K562 (cell line): ENCODE measurements at regions of chr1 and their contacts with region 1.

Region 1: DNA sequence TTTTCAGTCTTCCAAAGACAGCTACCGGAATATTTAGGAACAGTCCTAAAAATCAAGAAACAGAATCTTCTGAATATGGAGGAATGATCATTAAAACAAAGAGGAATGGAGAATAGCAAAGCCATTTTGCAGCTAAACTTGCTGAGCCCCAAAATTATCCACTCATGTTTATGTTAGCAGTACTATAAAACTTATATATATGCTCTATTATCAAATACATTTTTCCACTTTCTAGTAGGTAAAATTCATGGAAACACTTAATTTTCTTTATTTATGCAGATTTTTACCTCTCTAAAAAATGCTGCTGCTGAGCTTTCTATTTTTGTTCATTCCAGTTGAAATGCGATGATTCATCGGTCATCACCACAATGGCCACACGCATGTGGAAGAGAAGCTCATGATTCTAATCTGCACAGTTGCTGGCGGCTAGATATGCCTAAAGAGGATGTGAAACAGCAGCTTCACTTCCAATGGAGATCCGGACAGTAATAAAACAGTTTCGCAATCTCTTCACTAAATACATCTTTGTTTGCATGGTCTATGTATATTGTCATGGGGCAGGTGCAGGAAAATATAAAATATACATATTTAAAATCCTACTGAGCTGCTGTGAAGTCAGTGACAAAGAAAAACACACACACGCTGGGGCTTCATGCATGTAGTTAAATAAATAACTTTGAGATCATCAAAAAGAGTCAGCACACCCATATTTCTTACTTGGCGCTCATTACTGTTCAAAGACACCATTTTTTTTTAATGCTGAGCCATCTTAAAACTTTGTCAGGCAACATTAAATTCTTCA is 292.2 kb downstream of the SMYD3 start:
- DNase-seq: peak; percentile 62 to 96 (median 74)
- ATAC-seq: peak; percentile 95
- H3K4me3 ChIP-seq: no peak overlapping the region
- H3K27ac ChIP-seq: peak overlapping the region; percentile 88
- H3K4me1 ChIP-seq: peaks cover 11 to 39% of the 10 kb centered on the region in 2 experiments
- H3K27me3 ChIP-seq: no peaks in the 10 kb centered on the region
- CTCF ChIP-seq: no peak
- EP300 ChIP-seq: peak; percentile 97
- POLR2A ChIP-seq: no peak
- RAD21 ChIP-seq: peak in 1 of 2 experiments; percentile 43; a peak in 3 of 4 replicates

Region 2: DNA sequence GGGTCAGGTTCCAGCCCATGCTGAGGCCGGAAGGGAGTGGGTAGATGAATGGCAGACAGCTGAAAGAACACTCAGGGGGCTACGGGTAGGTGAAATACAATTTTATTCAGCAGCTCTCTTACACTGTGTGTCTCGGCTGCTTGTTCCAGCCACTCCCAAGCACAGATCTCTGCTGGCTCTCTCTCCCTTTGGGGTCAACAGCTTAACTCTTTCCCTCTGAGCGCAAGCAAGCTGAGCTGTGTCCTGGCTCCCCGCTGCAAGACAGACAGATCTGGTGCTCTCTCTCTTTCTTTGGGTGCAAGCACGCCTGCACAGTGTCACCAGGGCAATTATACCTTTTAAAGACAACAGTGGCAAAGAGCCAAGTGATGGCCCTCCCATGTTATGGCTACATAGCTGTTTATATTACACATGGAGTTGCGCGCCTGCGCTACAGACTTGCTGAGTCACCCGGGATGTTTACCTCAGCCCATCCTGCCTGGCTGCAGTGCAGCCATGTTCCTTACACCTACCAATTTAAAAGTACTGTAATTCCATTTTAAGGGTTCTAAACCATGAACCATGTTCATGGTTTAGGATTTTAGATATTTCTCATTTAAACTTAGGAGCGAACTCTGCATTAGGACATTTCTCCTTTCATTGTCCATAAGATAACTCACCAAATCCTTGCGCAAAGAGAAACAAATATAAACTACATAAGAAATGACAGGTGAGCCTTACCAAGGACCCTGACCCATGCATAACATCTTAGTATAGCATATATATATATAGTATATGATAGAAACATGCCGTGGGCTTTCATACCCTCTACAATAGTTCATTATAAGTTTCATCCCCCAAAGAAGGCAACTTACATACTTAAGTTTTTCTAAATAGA is 104.3 kb before region 1 on chr1:
- CTCF ChIA-PET with region 1: no interaction called
- POLR2A ChIA-PET with region 1: no interaction called
- in situ Hi-C with region 1: no loop called
- intact Hi-C with region 1: loop called (anchors 5 kb)
- DNase-seq: peak; percentile 76 to 92 (median 78)
- ATAC-seq: peak; percentile 87
- H3K4me3 ChIP-seq: no peak overlapping the region
- H3K27ac ChIP-seq: peak overlapping the region; percentile 71
- H3K4me1 ChIP-seq: peaks cover 15 to 65% of the 10 kb centered on the region in 2 experiments
- H3K27me3 ChIP-seq: no peaks in the 10 kb centered on the region
- CTCF ChIP-seq: no peak
- EP300 ChIP-seq: peak; percentile 64; the same call in 1 of the 2 replicates
- POLR2A ChIP-seq: no peak
- RAD21 ChIP-seq: peak; percentile 20 to 36; a peak in 2 of 4 replicates

Region 3: DNA sequence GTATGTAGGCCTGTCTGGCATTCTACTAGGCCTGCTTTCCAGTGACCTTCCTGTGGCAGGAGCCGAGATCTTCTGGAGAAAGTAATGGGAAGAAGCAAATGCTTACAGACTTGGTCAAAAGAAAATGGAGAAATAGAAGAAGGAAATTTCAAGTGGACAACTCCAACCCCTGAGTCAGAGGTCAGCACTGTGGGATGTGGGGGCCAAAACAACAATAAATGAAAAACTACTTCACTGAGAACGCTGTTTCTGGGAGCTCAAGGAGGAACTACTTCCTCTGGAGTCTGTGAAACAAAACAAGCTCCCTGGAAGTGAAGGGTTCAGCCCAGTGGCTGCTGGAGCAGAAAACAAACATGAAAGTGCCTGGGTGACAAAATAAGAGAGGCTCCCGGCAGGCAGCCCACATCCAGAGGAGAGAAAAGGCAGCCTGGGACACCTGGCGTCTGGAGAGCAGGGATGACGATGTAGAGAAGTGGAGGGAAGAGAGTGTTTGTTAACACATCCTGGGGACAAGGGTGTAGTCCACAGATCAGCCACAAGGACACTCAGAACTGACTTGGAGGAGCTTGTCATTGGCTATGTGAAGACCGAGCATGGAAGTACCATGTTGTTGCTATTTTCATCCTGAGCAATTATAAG is 63.0 kb before region 1 on chr1:
- CTCF ChIA-PET with region 1: no interaction called
- POLR2A ChIA-PET with region 1: interaction called, 3 read pairs
- in situ Hi-C with region 1: no loop called
- intact Hi-C with region 1: loop called (anchors 5 kb)
- DNase-seq: peak; percentile 63 to 73 (median 70)
- ATAC-seq: peak; percentile 87
- H3K4me3 ChIP-seq: no peak overlapping the region
- H3K27ac ChIP-seq: peak overlapping the region; percentile 84
- H3K4me1 ChIP-seq: peaks cover 16 to 51% of the 10 kb centered on the region in 2 experiments
- H3K27me3 ChIP-seq: no peaks in the 10 kb centered on the region
- CTCF ChIP-seq: peak; percentile 37 to 47 (median 47); a peak in 5 of 6 replicates
- EP300 ChIP-seq: peak; percentile 4; the same call in 1 of the 2 replicates
- POLR2A ChIP-seq: no peak
- RAD21 ChIP-seq: peak in 1 of 2 experiments; percentile 46; a peak in 2 of 4 replicates

Region 4: DNA sequence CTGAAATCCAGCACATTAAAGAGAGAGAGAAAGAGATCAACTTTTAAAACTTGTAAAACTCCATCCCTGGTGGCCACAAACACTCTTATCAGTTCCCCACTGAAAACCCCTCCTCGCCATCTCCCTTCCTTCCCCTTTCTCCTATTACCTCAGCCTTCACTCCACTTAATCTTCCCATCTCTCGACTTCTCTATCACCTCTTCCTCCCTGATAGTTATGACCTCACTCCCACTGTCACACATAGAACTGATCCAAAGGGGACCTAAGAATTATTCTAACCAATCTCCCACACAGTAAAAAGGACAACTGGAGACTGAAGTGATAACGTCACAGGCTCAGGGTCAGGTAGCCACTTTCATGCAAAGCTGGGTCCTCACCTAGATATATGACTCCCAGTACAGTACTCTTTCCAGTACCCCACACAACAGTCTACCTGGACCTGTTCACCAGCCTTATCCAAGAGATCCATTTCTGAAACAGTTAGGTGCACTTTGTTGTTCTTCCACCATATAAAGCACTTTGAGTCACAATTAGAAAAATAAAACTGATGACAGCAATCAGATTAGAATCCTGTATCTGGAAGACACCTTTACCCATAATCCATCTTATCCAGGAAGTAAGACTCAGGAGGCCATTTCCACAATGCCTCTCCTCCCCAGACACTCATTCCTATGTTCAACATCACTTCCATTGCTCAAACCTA is 32.6 kb before region 1 on chr1:
- CTCF ChIA-PET with region 1: no interaction called
- POLR2A ChIA-PET with region 1: interaction called, 5 read pairs
- in situ Hi-C with region 1: no loop called
- intact Hi-C with region 1: loop called (anchors 2 kb)
- DNase-seq: peak; percentile 43 to 81 (median 57)
- ATAC-seq: peak; percentile 32
- H3K4me3 ChIP-seq: no peak overlapping the region
- H3K27ac ChIP-seq: peak overlapping the region; percentile 67
- H3K4me1 ChIP-seq: peaks cover 0 to 52% of the 10 kb centered on the region in 2 experiments; a peak in 4 of 5 replicates
- H3K27me3 ChIP-seq: no peaks in the 10 kb centered on the region
- CTCF ChIP-seq: no peak
- EP300 ChIP-seq: peak; percentile 83
- POLR2A ChIP-seq: no peak
- RAD21 ChIP-seq: 0 out of 4 replicates have a peak, but pooled peaks have one; percentile 1 to 22

Region 5: GRCh38 chr1:246203180-246203579 is 11.7 kb before region 1 on chr1:
- CTCF ChIA-PET with region 1: no interaction called
- POLR2A ChIA-PET with region 1: interaction called, 12 read pairs
- in situ Hi-C with region 1: no loop called
- intact Hi-C with region 1: no loop called
- DNase-seq: no peak
- ATAC-seq: peak; percentile 89
- H3K4me3 ChIP-seq: no peak overlapping the region
- H3K27ac ChIP-seq: no peak overlapping the region
- H3K4me1 ChIP-seq: peaks cover 0 to 15% of the 10 kb centered on the region in 2 experiments; a peak in 2 of 5 replicates
- H3K27me3 ChIP-seq: no peaks in the 10 kb centered on the region
- CTCF ChIP-seq: peak; percentile 45 to 69 (median 55); a peak in 5 of 6 replicates
- EP300 ChIP-seq: no peak
- POLR2A ChIP-seq: no peak
- RAD21 ChIP-seq: peak; percentile 13 to 74; a peak in 2 of 4 replicates

Region 6: DNA sequence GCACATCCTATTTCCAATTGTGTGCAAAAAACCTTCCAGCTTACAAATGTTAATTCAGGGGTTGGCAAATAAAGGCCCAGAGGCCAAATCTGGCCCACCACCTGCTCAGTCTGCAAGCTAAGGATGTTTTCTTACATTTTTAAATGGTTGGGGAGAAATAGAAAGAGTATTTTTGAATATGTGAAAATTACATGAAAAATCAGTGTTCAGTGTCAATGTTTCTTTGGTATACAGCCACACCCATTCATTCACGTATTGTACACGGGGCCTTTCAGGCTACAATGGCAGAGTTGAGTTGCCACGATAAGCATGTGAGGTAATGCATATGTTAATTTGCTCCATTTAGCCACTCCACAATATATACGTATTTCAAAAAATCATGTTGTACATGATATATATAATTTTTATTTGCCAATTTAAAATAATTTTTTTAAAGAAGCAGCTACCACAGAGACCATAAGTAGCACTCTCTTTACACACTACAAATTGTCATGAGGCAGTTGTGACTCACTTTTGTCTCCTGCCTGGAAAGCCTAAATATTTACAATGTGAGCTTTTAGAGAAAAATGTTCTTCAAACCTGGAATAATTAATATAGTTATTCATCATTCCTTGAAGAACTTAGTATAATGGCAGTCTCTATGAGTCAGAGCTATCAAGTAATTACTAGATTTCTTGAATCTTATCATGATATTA is 102.6 kb after region 1 on chr1:
- CTCF ChIA-PET with region 1: no interaction called
- POLR2A ChIA-PET with region 1: no interaction called
- in situ Hi-C with region 1: no loop called
- intact Hi-C with region 1: no loop called
- DNase-seq: no peak
- ATAC-seq: no peak
- H3K4me3 ChIP-seq: no peak overlapping the region
- H3K27ac ChIP-seq: no peak overlapping the region
- H3K4me1 ChIP-seq: no peaks in the 10 kb centered on the region
- H3K27me3 ChIP-seq: no peaks in the 10 kb centered on the region
- CTCF ChIP-seq: no peak
- EP300 ChIP-seq: no peak
- POLR2A ChIP-seq: no peak
- RAD21 ChIP-seq: no peak

Region 7: GRCh38 chr1:246428542-246429308 is 213.8 kb after region 1 on chr1:
- CTCF ChIA-PET with region 1: no interaction called
- POLR2A ChIA-PET with region 1: no interaction called
- in situ Hi-C with region 1: no loop called
- intact Hi-C with region 1: loop called (anchors 10 kb)
- DNase-seq: peak in 2 of 4 experiments; percentile 42 to 80
- ATAC-seq: peak; percentile 88
- H3K4me3 ChIP-seq: no peak overlapping the region
- H3K27ac ChIP-seq: peak overlapping the region; percentile 56
- H3K4me1 ChIP-seq: peaks cover 7 to 27% of the 10 kb centered on the region in 2 experiments; a peak in 4 of 5 replicates
- H3K27me3 ChIP-seq: no peaks in the 10 kb centered on the region
- CTCF ChIP-seq: no peak
- EP300 ChIP-seq: peak; percentile 87
- POLR2A ChIP-seq: no peak
- RAD21 ChIP-seq: no peak